Activated CD4-positive, alpha-beta T cell treated with anti-CD3 and anti-CD28 coated beads, Interleukin-2, amount 10 ng/mL, durations not matched to agents 24 days and 14 days (primary cell): ENCODE measurements at regions of chr7 and their contacts with region 1.

Region 1: DNA sequence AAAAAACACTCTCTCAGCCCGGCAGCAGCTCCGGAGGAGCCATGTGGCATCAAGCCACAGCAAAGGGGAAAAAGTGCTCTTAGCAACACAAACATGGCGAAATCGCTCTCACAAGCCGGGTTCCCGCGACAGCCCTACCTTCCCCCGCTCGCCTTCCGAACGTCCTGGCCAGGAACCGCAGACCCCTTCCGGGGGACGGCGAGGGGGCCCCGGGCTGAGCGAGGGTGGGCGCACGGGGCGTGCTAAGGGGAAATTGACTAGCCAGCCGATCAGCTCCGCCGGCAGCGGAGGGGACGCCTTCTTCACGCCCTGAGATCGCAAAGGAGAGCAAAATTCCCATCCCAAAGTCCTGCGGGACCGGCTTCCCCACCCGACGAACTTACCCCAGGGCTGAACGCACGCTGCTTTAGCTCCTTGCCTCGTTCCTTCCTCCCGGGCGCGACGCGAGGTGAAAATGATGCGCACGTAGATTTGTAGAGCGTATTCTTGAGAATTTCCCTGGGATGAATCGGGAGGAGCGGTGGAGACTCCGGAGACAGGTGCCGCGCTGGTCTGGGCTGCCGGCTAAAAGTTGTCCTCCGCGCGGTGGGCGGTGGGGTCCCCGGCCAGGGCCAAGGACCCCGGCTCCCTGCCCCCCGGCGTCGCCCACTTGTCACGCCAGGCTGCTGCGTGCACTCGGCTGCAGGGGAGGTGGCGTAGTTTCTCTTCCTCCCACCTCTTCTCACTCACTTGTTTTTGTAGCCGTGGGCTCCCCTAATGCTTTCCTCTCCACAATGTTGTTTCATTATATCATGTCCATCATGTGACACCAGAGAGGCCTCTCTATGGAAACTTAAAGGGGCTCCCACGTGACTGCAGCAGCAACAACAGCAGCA is 220.1 kb upstream of the MKLN1 start:
- DNase-seq: peak; percentile 94
- H3K4me3 Mint-ChIP-seq: peak overlapping the region; percentile 94
- H3K27ac Mint-ChIP-seq: peak overlapping the region; percentile 99
- H3K4me1 Mint-ChIP-seq: peaks cover 65% of the 10 kb centered on the region
- H3K27me3 Mint-ChIP-seq: peaks cover 2% of the 10 kb centered on the region

Region 2: GRCh38 chr7:130668257-130669084 is 439.1 kb before region 1 on chr7 and contains the start of gene COPG2:
- intact Hi-C with region 1: loop called (anchors 5 kb)
- DNase-seq: peak; percentile 95
- H3K4me3 Mint-ChIP-seq: peak within 1 kb of the TSS; percentile 85
- H3K27ac Mint-ChIP-seq: peak within 1 kb of the TSS; percentile 84
- H3K4me1 Mint-ChIP-seq: peaks cover 19% of the 10 kb centered on the region
- H3K27me3 Mint-ChIP-seq: peaks cover 12% of the 10 kb centered on the region
- total RNA-seq, gene COPG2: 21.4 and 22.5 TPM in 2 replicates

Region 3: GRCh38 chr7:131007394-131008330 is 99.9 kb before region 1 on chr7:
- intact Hi-C with region 1: loop called (anchors 2 kb)
- DNase-seq: peak; percentile 89
- H3K4me3 Mint-ChIP-seq: peak overlapping the region; percentile 41
- H3K27ac Mint-ChIP-seq: peak overlapping the region; percentile 86
- H3K4me1 Mint-ChIP-seq: peaks cover 54% of the 10 kb centered on the region
- H3K27me3 Mint-ChIP-seq: no peaks in the 10 kb centered on the region

Region 4: DNA sequence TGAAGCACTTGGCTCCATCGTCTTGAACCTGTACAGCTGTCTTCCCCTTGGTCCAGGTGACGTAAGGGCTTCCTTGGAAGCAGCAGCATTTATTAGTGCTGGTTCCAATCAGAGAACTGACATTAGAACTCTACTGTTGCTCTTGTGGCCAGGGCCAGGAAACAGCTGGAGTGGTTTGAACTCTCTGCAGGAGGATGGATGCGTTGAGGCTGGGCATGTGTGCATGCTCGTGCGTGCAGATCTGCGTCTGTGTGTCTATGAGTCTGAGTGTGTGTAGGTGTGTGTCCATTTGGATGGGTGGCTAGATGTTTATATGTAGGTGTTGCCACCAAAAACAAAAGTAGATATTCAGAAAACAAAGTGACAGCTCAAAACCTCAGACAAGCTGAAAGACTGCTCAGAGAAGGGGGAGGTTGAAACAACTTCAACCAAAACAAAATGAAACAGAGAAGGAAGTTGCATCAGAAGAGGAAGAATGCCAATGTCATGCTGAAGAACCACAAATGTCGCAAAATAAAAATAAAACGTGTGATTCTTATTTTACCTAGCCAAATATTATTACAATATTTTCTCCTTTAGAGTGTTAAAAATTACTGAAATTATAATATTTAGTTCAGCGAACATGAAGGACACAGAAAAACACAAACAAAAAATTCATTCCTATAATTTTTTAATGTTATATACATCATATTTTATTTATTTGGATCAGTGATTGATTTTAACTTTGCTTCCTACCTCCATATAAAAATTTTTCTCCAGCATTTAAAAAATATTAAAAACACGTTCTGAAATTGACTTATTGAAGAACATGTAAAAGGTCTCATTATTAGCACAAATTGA is 124.0 kb after region 1 on chr7:
- intact Hi-C with region 1: loop called (anchors 1 kb)
- DNase-seq: peak; percentile 90
- H3K4me3 Mint-ChIP-seq: peak overlapping the region; percentile 72
- H3K27ac Mint-ChIP-seq: peak overlapping the region; percentile 87
- H3K4me1 Mint-ChIP-seq: peaks cover 59% of the 10 kb centered on the region
- H3K27me3 Mint-ChIP-seq: peaks cover 1% of the 10 kb centered on the region

Region 5: DNA sequence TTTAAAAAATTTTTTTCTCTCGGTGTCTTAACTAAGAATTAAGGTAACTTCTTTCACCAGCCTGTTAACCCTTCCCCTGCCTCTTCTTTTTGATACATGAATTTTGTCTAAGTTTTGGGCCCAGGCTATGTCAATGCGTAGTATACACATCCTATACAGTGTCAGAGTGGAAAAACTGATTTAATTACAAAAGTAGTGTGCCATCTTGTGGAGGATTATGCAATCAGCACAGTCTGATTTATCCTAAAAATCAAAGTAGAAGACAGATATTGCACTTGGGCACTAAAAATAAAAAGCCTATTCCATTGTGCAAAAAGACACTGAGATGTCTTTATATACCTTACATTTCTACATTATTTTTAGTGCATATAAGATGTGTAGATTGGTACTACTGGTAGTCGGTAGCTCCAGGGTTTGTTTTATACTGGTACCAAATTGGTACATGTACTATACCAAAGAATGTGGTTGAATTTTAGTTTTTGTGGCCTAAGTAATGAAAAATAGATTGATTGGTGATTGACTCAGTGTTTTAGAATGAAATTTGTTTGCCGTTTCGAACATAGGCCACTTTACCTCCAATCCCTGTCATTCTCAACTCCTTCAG is 316.7 kb after region 1 on chr7:
- intact Hi-C with region 1: loop called (anchors 5 kb)
- DNase-seq: peak; percentile 71
- H3K4me3 Mint-ChIP-seq: no peak overlapping the region
- H3K27ac Mint-ChIP-seq: no peak overlapping the region
- H3K4me1 Mint-ChIP-seq: peaks cover 2% of the 10 kb centered on the region
- H3K27me3 Mint-ChIP-seq: no peaks in the 10 kb centered on the region

Region 6: GRCh38 chr7:131466735-131467365 is 359.3 kb after region 1 on chr7:
- intact Hi-C with region 1: no loop called
- DNase-seq: no peak
- H3K4me3 Mint-ChIP-seq: no peak overlapping the region
- H3K27ac Mint-ChIP-seq: no peak overlapping the region
- H3K4me1 Mint-ChIP-seq: peaks cover 3% of the 10 kb centered on the region
- H3K27me3 Mint-ChIP-seq: no peaks in the 10 kb centered on the region